Dorsolateral prefrontal cortex (tissue), 120 donors: ENCODE measurements at regions of chr2 and their contacts with region 1.

Region 1: DNA sequence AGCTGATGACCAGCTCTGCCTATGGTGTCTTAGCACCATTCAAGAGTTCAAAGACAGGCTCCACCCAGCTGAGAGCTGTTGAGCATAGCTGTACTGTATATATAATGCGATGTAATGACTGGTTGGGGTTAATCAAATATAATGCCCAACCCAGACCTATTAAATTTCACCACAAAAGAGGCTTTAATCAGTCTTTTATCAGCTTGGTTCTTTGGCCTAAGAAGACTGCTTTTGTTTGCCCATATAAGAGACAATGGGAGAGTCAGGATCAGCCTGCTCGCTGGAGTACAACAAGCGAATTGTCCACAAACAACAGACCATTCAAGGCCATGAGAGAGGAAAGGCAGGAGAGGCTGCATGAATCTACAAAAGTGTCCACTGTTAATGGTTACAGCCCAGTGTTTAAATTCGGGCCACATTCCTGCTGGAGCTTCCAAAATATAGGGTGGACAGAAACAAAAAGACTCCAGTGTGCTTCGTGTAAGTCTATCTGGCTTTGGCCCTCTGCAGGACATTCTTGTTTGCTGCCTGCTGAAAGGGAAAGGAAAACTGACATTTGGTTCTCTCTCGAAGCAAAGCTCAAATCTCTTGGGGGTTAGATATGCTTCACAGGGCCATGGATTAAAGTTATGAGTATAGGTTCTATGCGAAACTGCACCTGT is 299.0 kb upstream of the FBXO11 start:
- DNase-seq: peak in 8 of 10 donors; percentile 59 to 88 (median 71)
- H3K4me3 ChIP-seq: peak overlapping the region in 53 of 59 donors; percentile 7 to 62 (median 40)
- H3K27ac ChIP-seq: peak overlapping the region; percentile 53 to 98 (median 93)
- H3K27me3 ChIP-seq: no peaks in the 10 kb centered on the region
- CTCF ChIP-seq: peak in 49 of 56 donors; percentile 13 to 72 (median 45)

Region 2: DNA sequence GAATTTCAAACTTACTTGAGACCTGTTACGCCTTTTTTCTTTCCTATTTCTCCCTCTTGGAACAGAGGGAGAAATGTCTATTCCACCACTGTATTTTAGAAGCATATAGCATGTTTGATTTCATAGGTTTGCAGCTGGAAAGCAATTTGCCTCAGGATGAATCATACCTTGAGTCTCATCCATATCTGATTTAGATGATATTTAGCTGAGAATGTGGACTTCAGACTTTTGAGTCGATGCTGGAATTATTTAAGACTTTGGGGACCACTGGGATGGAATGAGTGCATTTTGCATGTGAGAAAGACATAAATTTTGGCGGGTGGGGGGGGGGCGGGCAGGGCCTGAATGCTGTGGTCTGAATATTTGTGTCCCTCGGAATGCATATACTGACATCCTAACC is 41.9 kb after region 1 on chr2:
- intact Hi-C with region 1: no loop called
- DNase-seq: no peak
- H3K4me3 ChIP-seq: no peak overlapping the region
- H3K27ac ChIP-seq: peak overlapping the region in 1 of 59 donors; percentile 72
- H3K27me3 ChIP-seq: no peaks in the 10 kb centered on the region
- CTCF ChIP-seq: no peak

Region 3: GRCh38 chr2:48414980-48415835 is 209.9 kb after region 1 on chr2:
- intact Hi-C with region 1: loop called (anchors 2 to 5 kb)
- DNase-seq: peak; percentile 62 to 94 (median 81)
- H3K4me3 ChIP-seq: peak overlapping the region in 45 of 59 donors; percentile 1 to 57 (median 27)
- H3K27ac ChIP-seq: peak overlapping the region; percentile 45 to 98 (median 92)
- H3K27me3 ChIP-seq: no peaks in the 10 kb centered on the region
- CTCF ChIP-seq: peak in 8 of 56 donors; percentile 2 to 32 (median 24)

Region 4: GRCh38 chr2:48420512-48421197 is 215.4 kb after region 1 on chr2:
- intact Hi-C with region 1: loop called (anchors 2 to 5 kb)
- DNase-seq: peak; percentile 85 to 95 (median 92)
- H3K4me3 ChIP-seq: peak overlapping the region in 55 of 59 donors; percentile 2 to 58 (median 33)
- H3K27ac ChIP-seq: peak overlapping the region in 56 of 59 donors; percentile 22 to 98 (median 78)
- H3K27me3 ChIP-seq: no peaks in the 10 kb centered on the region
- CTCF ChIP-seq: peak; percentile 93 to 100 (median 99)